ENCODE measurements at regions of chr1 and their contacts with region 1.

Region 1: DNA sequence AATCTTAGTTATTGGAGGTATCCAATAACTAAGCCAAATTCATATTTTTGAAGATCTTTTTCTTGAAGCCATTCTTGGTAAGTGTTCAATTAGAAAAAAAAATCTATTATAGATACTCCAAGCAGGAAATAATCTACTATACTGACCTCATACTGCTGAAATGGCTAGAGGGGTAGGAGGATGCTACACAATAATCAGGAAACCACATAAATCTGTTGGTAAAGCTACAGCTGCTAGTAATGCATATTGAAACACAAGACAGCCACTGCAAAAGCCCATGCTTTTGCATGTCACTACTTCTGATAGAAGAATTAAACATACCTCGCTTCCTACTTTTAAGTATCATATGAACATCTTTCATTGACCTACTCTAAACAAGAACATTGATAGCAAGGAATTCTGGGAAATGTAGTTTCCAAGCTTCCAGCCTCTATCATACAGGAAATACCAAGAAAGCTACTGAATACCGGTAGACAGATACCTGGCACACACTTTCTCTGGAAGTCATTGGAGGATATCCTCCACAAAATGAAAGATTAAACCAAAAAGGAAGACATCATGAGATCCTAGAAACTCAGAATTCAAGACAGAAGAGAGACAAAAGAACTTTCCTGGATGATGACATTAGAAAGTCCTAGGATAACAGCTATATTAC is 103.0 kb upstream of the VAV3 start:
- DNase-seq: peak in 1 of 5 donors; percentile 21
- H3K4me3 ChIP-seq: no peak overlapping the region
- H3K4me3 Mint-ChIP-seq: no peak overlapping the region
- H3K27ac ChIP-seq: no peak overlapping the region
- H3K27ac Mint-ChIP-seq: peak overlapping the region in 3 of 7 donors; percentile 8 to 80 (median 49)
- H3K4me1 ChIP-seq: no peaks in the 10 kb centered on the region
- H3K4me1 Mint-ChIP-seq: peaks cover 4 to 6% (median 5%) of the 10 kb centered on the region in 4 donors
- H3K27me3 ChIP-seq: no peaks in the 10 kb centered on the region
- H3K27me3 Mint-ChIP-seq: no peaks in the 10 kb centered on the region

Region 2: GRCh38 chr1:107897438-107898345 is 170.3 kb before region 1 on chr1:
- CTCF ChIA-PET with region 1: no interaction called
- POLR2A ChIA-PET with region 1: no interaction called
- intact Hi-C with region 1: no loop called
- DNase-seq: no peak
- H3K4me3 ChIP-seq: no peak overlapping the region
- H3K4me3 Mint-ChIP-seq: peak overlapping the region in 6 of 8 donors; percentile 2 to 49 (median 13)
- H3K27ac ChIP-seq: no peak overlapping the region
- H3K27ac Mint-ChIP-seq: peak overlapping the region in 4 of 7 donors; percentile 2 to 19 (median 9)
- H3K4me1 ChIP-seq: peaks cover 13% of the 10 kb centered on the region
- H3K4me1 Mint-ChIP-seq: peaks cover 9 to 30% (median 18%) of the 10 kb centered on the region in 4 donors
- H3K27me3 ChIP-seq: no peaks in the 10 kb centered on the region
- H3K27me3 Mint-ChIP-seq: no peaks in the 10 kb centered on the region

Region 3: GRCh38 chr1:108041360-108042142 is 26.5 kb before region 1 on chr1:
- CTCF ChIA-PET with region 1: no interaction called
- POLR2A ChIA-PET with region 1: no interaction called
- intact Hi-C with region 1: no loop called
- DNase-seq: no peak
- H3K4me3 ChIP-seq: no peak overlapping the region
- H3K4me3 Mint-ChIP-seq: peak overlapping the region in 2 of 8 donors; percentile 31 to 36
- H3K27ac ChIP-seq: no peak overlapping the region
- H3K27ac Mint-ChIP-seq: peak overlapping the region in 2 of 7 donors; percentile 32 to 76
- H3K4me1 ChIP-seq: peaks cover 6% of the 10 kb centered on the region
- H3K4me1 Mint-ChIP-seq: peaks cover 6 to 8% (median 7%) of the 10 kb centered on the region in 4 donors
- H3K27me3 ChIP-seq: no peaks in the 10 kb centered on the region
- H3K27me3 Mint-ChIP-seq: no peaks in the 10 kb centered on the region

Region 4: DNA sequence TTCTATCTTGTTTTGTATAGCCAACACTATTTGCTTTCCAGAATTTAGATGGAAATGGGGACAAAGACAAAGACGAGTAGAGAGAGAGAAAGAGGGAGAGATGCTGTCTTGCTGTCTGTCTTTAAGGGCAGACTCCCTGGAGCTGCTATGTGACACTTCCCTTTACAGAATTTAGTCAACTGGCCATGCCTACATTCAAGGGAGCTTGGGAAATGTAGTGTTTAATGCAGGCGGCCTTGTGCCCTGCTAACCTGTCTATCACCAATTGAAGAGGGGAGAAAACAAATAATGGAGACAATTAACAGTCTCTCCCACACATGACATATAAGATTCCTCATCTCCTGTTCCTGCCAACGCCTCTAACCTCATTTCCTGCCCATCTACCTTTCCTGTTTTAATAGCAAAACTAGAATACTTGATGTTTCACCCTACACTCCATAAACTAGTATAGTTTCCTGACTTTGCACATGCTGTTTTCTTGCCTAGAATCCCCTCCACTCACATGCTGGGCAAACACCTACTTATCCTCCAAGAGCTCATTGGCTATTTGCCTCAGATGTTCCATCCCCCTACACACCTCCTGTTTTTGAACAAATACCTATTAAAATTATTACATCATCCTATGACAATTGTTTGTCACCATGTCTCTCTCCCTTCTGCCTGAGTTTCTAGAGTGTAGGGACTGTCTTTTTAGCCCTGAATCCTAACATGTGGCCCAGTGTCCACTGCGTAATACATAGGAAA is 14.9 kb after region 1 on chr1:
- CTCF ChIA-PET with region 1: no interaction called
- POLR2A ChIA-PET with region 1: interaction called, 4 read pairs
- intact Hi-C with region 1: loop called (anchors 2 kb)
- DNase-seq: peak in 2 of 5 donors; percentile 14 to 56
- H3K4me3 ChIP-seq: no peak overlapping the region
- H3K4me3 Mint-ChIP-seq: peak overlapping the region in 6 of 8 donors; percentile 2 to 45 (median 35)
- H3K27ac ChIP-seq: no peak overlapping the region
- H3K27ac Mint-ChIP-seq: peak overlapping the region; percentile 8 to 80 (median 31)
- H3K4me1 ChIP-seq: peaks cover 58% of the 10 kb centered on the region
- H3K4me1 Mint-ChIP-seq: peaks cover 40 to 58% (median 53%) of the 10 kb centered on the region in 4 donors
- H3K27me3 ChIP-seq: no peaks in the 10 kb centered on the region
- H3K27me3 Mint-ChIP-seq: no peaks in the 10 kb centered on the region

Region 5: GRCh38 chr1:108096089-108096488 is 28.1 kb after region 1 on chr1:
- CTCF ChIA-PET with region 1: no interaction called
- POLR2A ChIA-PET with region 1: no interaction called
- intact Hi-C with region 1: no loop called
- DNase-seq: no peak
- H3K4me3 ChIP-seq: no peak overlapping the region
- H3K4me3 Mint-ChIP-seq: no peak overlapping the region
- H3K27ac ChIP-seq: no peak overlapping the region
- H3K27ac Mint-ChIP-seq: no peak overlapping the region
- H3K4me1 ChIP-seq: no peaks in the 10 kb centered on the region
- H3K4me1 Mint-ChIP-seq: peaks cover 0 to 8% (median 3%) of the 10 kb centered on the region in 4 donors
- H3K27me3 ChIP-seq: no peaks in the 10 kb centered on the region
- H3K27me3 Mint-ChIP-seq: no peaks in the 10 kb centered on the region